Pancreas (tissue), 10 donors: ENCODE measurements at regions of chr1 and their contacts with region 1.

Region 1: DNA sequence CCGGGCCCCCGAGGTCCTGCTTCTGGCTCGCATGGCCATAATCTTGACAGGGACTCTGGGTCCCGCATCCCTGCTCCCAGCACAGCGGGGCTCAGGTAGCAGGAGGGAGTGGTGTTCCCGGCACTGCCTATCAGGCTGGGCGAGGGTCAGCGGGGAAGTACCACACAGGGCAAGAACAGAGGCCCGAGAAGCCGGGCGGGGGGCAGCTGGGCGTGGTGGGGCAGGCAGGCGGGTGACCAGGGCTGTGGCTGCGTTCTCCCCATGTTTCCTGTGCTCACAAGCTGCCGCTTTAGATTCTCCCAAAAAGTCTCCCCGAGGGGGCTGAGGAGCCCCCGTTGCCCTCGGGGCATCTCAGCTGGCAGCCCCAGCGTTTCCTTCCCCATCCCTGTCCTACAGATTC is 18.3 kb downstream of the ATAD3B start:
- DNase-seq: no peak
- ATAC-seq: no peak
- H3K4me3 ChIP-seq: no peak overlapping the region
- H3K27ac ChIP-seq: no peak overlapping the region
- H3K4me1 ChIP-seq: no peaks in the 10 kb centered on the region
- H3K27me3 ChIP-seq: no peaks in the 10 kb centered on the region
- CTCF ChIP-seq: no peak

Region 2: DNA sequence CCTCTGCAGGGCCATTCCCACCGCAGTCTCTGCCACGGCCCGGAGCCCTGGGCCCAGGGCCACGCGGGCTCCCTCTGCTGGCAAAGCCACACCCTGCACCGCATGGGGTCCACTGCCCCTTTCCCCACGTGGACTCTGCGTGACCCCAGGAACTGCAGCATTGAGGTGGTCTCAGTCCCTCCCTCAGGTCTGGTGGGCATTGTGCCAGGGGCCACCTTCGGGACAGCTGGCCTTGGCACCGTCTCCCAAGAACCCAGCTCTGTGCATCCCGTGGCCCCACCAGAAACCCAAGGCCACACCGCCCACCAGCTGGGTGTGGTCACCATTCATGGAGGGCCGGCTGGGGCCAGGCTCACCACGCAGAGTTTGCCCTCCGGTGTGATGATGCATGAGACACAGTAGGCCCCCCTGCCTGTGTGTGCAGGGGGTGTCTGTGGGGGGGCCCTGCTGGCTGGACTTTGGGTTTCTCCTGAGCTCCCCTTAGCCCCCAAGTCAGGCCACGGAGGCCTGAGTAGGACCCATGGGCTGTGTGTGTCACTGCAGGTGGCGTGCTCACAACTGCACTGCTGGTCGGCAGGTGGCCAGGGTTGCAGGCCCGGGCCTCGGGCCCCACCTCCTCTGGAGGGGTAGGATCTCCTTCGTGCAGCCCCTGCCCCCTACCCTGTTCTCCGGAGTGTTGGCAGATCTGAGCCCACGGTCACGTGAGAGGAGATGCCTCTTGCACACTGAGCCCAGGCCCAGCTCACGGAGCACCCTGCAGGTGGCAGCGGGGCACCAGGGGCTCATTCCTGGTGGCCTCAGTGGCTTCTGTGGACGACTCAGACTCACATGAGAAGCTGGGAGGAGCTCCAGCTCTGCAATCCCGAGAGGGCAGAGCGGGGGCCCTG is 48.6 kb before region 1 on chr1:
- intact Hi-C with region 1: loop called in 1 of 3 experiments (anchors 5 kb)
- DNase-seq: peak; percentile 44 to 87 (median 72)
- ATAC-seq: peak; percentile 63 to 72 (median 65)
- H3K4me3 ChIP-seq: no peak overlapping the region
- H3K27ac ChIP-seq: peak overlapping the region in 2 of 4 donors; percentile 20 to 53
- H3K4me1 ChIP-seq: peaks cover 33 to 34% (median 33%) of the 10 kb centered on the region in 3 donors
- H3K27me3 ChIP-seq: no peaks in the 10 kb centered on the region
- CTCF ChIP-seq: peak; percentile 80 to 93 (median 88)

Region 3: GRCh38 chr1:1562556-1563195 is 72.8 kb after region 1 on chr1:
- intact Hi-C with region 1: no loop called
- DNase-seq: no peak
- ATAC-seq: peak in 1 of 4 donors; percentile 6
- H3K4me3 ChIP-seq: no peak overlapping the region
- H3K27ac ChIP-seq: no peak overlapping the region
- H3K4me1 ChIP-seq: no peaks in the 10 kb centered on the region
- H3K27me3 ChIP-seq: no peaks in the 10 kb centered on the region
- CTCF ChIP-seq: no peak